ENCODE measurements at regions of chr11 and their contacts with region 1.

Region 1: DNA sequence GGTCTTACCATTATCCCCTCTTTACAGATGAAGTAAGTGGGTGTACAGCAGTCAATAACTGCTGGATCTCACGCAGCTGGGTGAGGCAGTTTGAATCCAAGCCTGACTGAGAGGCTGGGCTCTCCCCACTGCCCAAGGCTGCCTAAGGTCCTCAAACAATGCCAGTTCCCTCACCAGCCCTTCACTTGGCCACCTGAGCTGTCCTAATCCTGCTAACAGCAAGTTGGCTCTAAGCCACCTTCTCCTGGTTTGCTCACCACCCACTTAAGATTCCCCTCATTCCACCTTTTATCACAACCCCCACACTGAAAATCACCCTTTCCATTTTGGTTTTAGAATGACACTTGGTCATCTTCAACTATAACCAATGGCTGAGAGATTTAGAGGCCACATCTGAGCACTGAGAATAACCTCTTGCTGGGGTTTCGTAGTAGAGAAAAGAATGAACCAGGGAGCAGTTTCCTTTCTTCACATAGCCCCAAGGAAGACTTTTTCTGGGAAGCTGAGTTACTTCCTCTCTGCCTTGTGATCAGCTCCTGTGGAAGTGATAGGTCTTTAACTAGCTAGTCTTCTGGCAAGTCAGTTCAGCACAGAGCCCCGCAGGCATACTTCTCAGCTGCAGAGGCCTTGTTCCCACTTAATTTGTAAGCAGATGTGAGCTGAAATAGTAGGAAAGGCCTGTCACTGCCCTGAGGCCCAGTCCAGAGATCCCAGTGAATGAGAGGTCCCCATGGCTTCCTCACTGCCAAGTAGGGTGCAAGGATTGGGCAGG is 57.8 kb upstream of the TTC12 start:
- DNase-seq: no peak
- H3K4me3 ChIP-seq: no peak overlapping the region
- H3K27ac ChIP-seq: no peak overlapping the region
- H3K4me1 ChIP-seq: no peaks in the 10 kb centered on the region
- H3K27me3 ChIP-seq: no peaks in the 10 kb centered on the region
- CTCF ChIP-seq: no peak
- POLR2A ChIP-seq: no peak

Region 2: DNA sequence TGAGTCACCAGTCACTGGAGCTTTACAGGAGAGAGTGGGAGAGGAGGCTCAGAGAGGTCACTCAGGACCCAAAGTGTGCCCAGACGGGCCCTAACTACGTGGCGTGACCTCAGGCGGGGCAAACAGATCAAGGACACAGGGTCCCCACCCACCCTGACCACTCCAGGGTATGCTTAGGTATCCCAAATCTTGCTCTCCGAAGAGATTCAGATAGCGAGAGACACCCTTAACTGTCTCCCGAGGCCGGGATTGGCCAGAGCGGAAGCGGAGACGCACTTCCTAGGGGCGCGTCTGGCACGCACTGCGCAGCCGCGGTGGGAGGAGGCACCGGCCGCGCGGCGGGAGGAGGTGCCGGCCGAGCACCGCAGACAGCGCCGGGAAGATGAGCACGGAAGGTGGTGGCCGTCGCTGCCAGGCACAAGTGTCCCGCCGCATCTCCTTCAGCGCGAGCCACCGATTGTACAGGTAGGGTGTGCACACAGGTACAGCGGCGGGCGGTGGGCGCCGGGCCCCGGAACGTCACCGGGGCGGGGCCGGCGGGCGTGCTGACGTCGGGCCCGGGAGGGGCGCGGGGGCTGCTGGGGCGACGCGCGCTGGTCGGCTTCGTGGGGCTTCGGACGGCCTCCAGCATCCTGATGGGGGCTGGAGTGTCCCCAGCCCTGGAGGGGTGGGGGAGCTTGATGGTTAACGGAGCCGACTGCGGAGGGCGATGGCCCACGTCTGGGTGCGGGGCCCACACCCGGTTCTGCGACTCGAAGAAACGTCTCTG is 1030.4 kb before region 1 on chr11 and contains the start of gene PTS:
- intact Hi-C with region 1: loop called (anchors 5 kb)
- DNase-seq: peak; percentile 81
- H3K4me3 ChIP-seq: peak within 1 kb of the TSS; percentile 76 to 99 (median 80)
- H3K27ac ChIP-seq: peak within 1 kb of the TSS; percentile 97 to 98
- H3K4me1 ChIP-seq: peaks cover 0 to 7% of the 10 kb centered on the region in 2 donors
- H3K27me3 ChIP-seq: no peaks in the 10 kb centered on the region
- CTCF ChIP-seq: no peak
- POLR2A ChIP-seq: peak; percentile 91
- total RNA-seq, gene PTS: 21.8 to 40.4 (median 38.7) TPM